ENCODE measurements at regions of chr2 and their contacts with region 1.

Region 1: GRCh38 chr2:55901325-55901724 is 22.3 kb downstream of the EFEMP1 start:
- DNase-seq: peak; percentile 55

Region 2: DNA sequence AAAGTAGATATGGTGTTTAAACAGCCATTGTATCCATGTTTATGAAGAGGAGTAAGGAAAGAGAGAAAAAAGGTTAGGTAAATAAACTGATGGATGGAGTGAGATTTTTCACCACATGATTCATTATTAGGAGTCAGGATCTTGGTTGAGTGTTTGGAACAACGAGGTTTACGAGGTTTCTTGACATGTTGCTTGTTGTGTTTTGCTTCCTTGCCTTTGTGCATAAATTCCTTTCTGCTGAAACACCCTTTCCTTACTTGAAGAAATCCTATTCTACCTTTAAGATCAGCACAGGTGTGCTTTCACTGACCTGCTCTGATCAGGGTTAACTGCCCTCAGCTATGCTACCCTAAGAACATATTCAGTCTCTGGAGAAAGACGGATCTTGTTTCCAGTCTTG is 44.4 kb before region 1 on chr2:
- in situ Hi-C with region 1: loop called (anchors 10 kb)
- DNase-seq: peak; percentile 33